ENCODE measurements at regions of chr6 and their contacts with region 1.

Region 1: GRCh38 chr6:121055572-121056163 is 278.6 kb downstream of the TBC1D32 start:
- DNase-seq: peak in 1 of 2 experiments; percentile 60
- H3K4me3 ChIP-seq: no peak overlapping the region
- H3K4me3 Mint-ChIP-seq: no peak overlapping the region
- H3K27ac Mint-ChIP-seq: no peak overlapping the region
- H3K4me1 ChIP-seq: no peaks in the 10 kb centered on the region
- H3K4me1 Mint-ChIP-seq: no peaks in the 10 kb centered on the region
- H3K27me3 ChIP-seq: no peaks in the 10 kb centered on the region
- H3K27me3 Mint-ChIP-seq: no peaks in the 10 kb centered on the region
- CTCF ChIP-seq: peak; percentile 64 to 69

Region 2: DNA sequence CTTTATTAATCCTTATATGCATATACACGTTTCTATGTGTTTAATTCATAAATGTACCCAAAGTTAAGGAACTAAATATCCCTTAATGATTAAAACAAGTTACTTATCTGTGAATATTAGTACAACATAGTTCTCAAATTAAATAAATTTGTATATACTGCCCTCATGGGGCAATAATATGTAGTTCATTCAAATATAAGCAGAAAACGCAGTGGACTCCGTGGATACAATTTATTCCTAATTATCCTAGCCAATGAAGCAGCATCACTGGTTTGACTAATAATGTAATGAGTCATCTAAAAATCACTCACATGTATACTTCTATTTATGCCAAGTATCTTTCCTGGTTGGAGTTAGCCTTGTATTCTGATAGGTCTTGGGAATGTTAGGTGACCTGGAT is 167.0 kb after region 1 on chr6:
- CTCF ChIA-PET with region 1: no interaction called
- POLR2A ChIA-PET with region 1: no interaction called
- intact Hi-C with region 1: loop called (anchors 1 kb)
- DNase-seq: no peak
- H3K4me3 ChIP-seq: no peak overlapping the region
- H3K4me3 Mint-ChIP-seq: no peak overlapping the region
- H3K27ac Mint-ChIP-seq: no peak overlapping the region
- H3K4me1 ChIP-seq: no peaks in the 10 kb centered on the region
- H3K4me1 Mint-ChIP-seq: no peaks in the 10 kb centered on the region
- H3K27me3 ChIP-seq: no peaks in the 10 kb centered on the region
- H3K27me3 Mint-ChIP-seq: no peaks in the 10 kb centered on the region
- CTCF ChIP-seq: no peak

Region 3: DNA sequence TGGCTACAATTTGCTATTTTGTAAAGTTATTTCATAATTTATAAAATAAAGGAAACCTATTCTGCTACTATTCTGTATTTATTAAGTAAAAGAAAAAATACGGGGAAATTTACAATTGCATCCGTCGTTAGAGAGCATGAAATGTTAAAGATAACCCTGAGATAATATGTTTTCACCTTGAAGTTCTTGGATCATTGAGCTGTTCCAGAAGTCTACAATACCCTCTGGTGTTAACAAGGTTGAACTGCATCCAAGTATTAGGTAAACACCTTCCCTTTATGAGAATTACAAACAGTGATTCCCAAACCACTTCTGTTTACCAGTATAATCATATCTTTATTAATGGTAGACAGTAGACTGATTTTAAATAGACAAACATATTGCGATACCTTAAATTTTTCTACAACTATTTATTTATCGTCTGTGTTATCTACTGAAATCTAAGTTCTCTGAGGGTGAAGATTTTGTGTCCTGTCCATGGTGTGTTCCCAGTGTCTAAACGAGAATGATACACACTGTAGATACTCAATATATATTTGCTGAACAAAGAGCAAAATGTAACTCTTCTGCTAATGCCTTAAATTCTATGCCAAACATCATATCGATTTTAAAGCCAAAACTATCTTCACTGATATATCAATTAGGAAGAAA is 250.4 kb after region 1 on chr6:
- CTCF ChIA-PET with region 1: interaction called, 11 read pairs
- POLR2A ChIA-PET with region 1: no interaction called
- intact Hi-C with region 1: loop called (anchors 1 kb)
- DNase-seq: peak in 1 of 2 experiments; percentile 31
- H3K4me3 ChIP-seq: no peak overlapping the region
- H3K4me3 Mint-ChIP-seq: no peak overlapping the region
- H3K27ac Mint-ChIP-seq: no peak overlapping the region
- H3K4me1 ChIP-seq: no peaks in the 10 kb centered on the region
- H3K4me1 Mint-ChIP-seq: no peaks in the 10 kb centered on the region
- H3K27me3 ChIP-seq: no peaks in the 10 kb centered on the region
- H3K27me3 Mint-ChIP-seq: no peaks in the 10 kb centered on the region
- CTCF ChIP-seq: peak; percentile 57 to 80

Region 4: GRCh38 chr6:121354764-121355163 is 299.1 kb after region 1 on chr6:
- CTCF ChIA-PET with region 1: no interaction called
- POLR2A ChIA-PET with region 1: no interaction called
- intact Hi-C with region 1: loop called (anchors 1 kb)
- DNase-seq: no peak
- H3K4me3 ChIP-seq: no peak overlapping the region
- H3K4me3 Mint-ChIP-seq: no peak overlapping the region
- H3K27ac Mint-ChIP-seq: no peak overlapping the region
- H3K4me1 ChIP-seq: no peaks in the 10 kb centered on the region
- H3K4me1 Mint-ChIP-seq: no peaks in the 10 kb centered on the region
- H3K27me3 ChIP-seq: no peaks in the 10 kb centered on the region
- H3K27me3 Mint-ChIP-seq: no peaks in the 10 kb centered on the region
- CTCF ChIP-seq: peak; percentile 4 to 31

Region 5: GRCh38 chr6:121399966-121400365 is 344.3 kb after region 1 on chr6:
- CTCF ChIA-PET with region 1: interaction called, 3 read pairs
- POLR2A ChIA-PET with region 1: no interaction called
- intact Hi-C with region 1: loop called (anchors 2 kb)
- DNase-seq: peak; percentile 45 to 59
- H3K4me3 ChIP-seq: no peak overlapping the region
- H3K4me3 Mint-ChIP-seq: peak overlapping the region; percentile 43
- H3K27ac Mint-ChIP-seq: peak overlapping the region; percentile 92
- H3K4me1 ChIP-seq: peaks cover 17% of the 10 kb centered on the region
- H3K4me1 Mint-ChIP-seq: peaks cover 17% of the 10 kb centered on the region
- H3K27me3 ChIP-seq: no peaks in the 10 kb centered on the region
- H3K27me3 Mint-ChIP-seq: no peaks in the 10 kb centered on the region
- CTCF ChIP-seq: no peak

Region 6: DNA sequence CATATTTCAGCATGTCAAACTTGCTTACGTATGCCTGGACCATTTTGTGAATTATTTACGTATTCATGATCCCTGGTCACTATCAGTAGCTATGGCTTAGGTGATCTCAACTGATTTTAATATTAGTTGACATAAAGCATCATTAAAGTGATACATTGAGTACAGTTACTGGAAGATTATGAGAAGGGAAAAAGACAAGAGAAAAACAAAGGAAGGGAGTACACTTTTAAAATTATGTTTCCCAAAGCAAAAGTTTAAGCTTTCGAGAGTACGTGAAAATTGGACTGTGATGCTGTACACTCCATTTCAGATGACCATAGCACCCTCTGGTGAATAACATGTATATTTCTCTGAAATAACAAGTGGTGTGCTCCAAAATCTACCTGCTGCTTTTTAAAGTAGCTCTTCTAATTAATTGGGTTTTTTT is 1128.7 kb after region 1 on chr6:
- CTCF ChIA-PET with region 1: no interaction called
- POLR2A ChIA-PET with region 1: no interaction called
- intact Hi-C with region 1: loop called (anchors 2 kb)
- DNase-seq: peak in 1 of 2 experiments; percentile 6
- H3K4me3 ChIP-seq: no peak overlapping the region
- H3K4me3 Mint-ChIP-seq: no peak overlapping the region
- H3K27ac Mint-ChIP-seq: no peak overlapping the region
- H3K4me1 ChIP-seq: no peaks in the 10 kb centered on the region
- H3K4me1 Mint-ChIP-seq: no peaks in the 10 kb centered on the region
- H3K27me3 ChIP-seq: no peaks in the 10 kb centered on the region
- H3K27me3 Mint-ChIP-seq: peaks cover 7% of the 10 kb centered on the region
- CTCF ChIP-seq: peak in 1 of 2 experiments; percentile 26